ENCODE measurements at regions of chr12 and their contacts with region 1.

Region 1: GRCh38 chr12:24705741-24706358 is 243.1 kb downstream of the BCAT1 start:
- DNase-seq: no peak
- ATAC-seq: peak; percentile 91
- H3K4me3 Mint-ChIP-seq: peak overlapping the region; percentile 66
- H3K27ac Mint-ChIP-seq: peak overlapping the region; percentile 81
- H3K4me1 Mint-ChIP-seq: peaks cover 51% of the 10 kb centered on the region
- H3K27me3 Mint-ChIP-seq: no peaks in the 10 kb centered on the region
- CTCF ChIP-seq: no peak

Region 2: DNA sequence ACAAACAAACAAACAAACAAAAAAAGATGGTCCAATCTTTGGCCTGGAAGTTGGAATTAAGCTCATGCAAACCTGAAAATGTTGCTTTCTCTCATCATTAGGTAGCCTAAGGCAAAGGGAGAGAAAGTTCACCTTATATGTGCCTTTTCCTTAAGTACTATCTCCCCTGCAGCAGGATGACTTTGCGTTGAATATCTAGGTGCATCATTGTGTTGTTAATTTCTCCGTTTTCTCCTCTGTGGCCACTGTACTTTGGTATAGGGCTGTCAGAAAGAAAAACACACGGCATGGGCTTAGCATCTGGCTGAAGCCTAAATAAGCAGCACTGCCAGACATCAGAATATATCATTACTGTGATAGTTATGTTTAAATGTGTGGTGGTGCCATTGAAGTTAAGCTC is 102.5 kb before region 1 on chr12:
- CTCF ChIA-PET with region 1: no interaction called
- POLR2A ChIA-PET with region 1: interaction called, 10 read pairs
- intact Hi-C with region 1: loop called (anchors 2 kb)
- DNase-seq: no peak
- ATAC-seq: no peak
- H3K4me3 Mint-ChIP-seq: peak overlapping the region; percentile 8
- H3K27ac Mint-ChIP-seq: peak overlapping the region; percentile 68
- H3K4me1 Mint-ChIP-seq: peaks cover 55% of the 10 kb centered on the region
- H3K27me3 Mint-ChIP-seq: no peaks in the 10 kb centered on the region
- CTCF ChIP-seq: no peak

Region 3: GRCh38 chr12:24719293-24719721 is 13.5 kb after region 1 on chr12:
- CTCF ChIA-PET with region 1: interaction called, 5 read pairs
- POLR2A ChIA-PET with region 1: interaction called, 111 read pairs
- intact Hi-C with region 1: loop called (anchors 1 kb)
- DNase-seq: no peak
- ATAC-seq: peak; percentile 94
- H3K4me3 Mint-ChIP-seq: peak overlapping the region; percentile 64
- H3K27ac Mint-ChIP-seq: peak overlapping the region; percentile 92
- H3K4me1 Mint-ChIP-seq: peaks cover 35% of the 10 kb centered on the region
- H3K27me3 Mint-ChIP-seq: no peaks in the 10 kb centered on the region
- CTCF ChIP-seq: no peak

Region 4: GRCh38 chr12:24742378-24742777 is 36.5 kb after region 1 on chr12:
- CTCF ChIA-PET with region 1: interaction called, 3 read pairs
- POLR2A ChIA-PET with region 1: interaction called, 23 read pairs
- intact Hi-C with region 1: loop called (anchors 2 kb)
- DNase-seq: peak; percentile 29
- ATAC-seq: peak; percentile 87
- H3K4me3 Mint-ChIP-seq: peak overlapping the region; percentile 64
- H3K27ac Mint-ChIP-seq: peak overlapping the region; percentile 90
- H3K4me1 Mint-ChIP-seq: peaks cover 56% of the 10 kb centered on the region
- H3K27me3 Mint-ChIP-seq: no peaks in the 10 kb centered on the region
- CTCF ChIP-seq: no peak

Measured in activated B cell treated with CpG ODN at 0.5 μM for 24 hours (primary cell).